ENCODE measurements at regions of chr9 and their contacts with region 1.

Region 1: GRCh38 chr9:116000748-116001329 is 152.8 kb upstream of the PAPPA start:
- DNase-seq: peak in 1 of 2 donors; percentile 14
- ATAC-seq: peak in 1 of 2 donors; percentile 44
- H3K4me3 ChIP-seq: no peak overlapping the region
- H3K27ac ChIP-seq: no peak overlapping the region
- H3K4me1 ChIP-seq: peaks cover 18 to 38% of the 10 kb centered on the region in 2 donors
- H3K27me3 ChIP-seq: no peaks in the 10 kb centered on the region
- CTCF ChIP-seq: peak; percentile 25 to 57 (median 44)
- POLR2A ChIP-seq: no peak

Region 2: GRCh38 chr9:115883457-115884329 is 117.1 kb before region 1 on chr9:
- in situ Hi-C with region 1: no loop called
- intact Hi-C with region 1: loop called (anchors 5 kb)
- DNase-seq: no peak
- ATAC-seq: peak; percentile 62 to 66
- H3K4me3 ChIP-seq: no peak overlapping the region
- H3K27ac ChIP-seq: no peak overlapping the region
- H3K4me1 ChIP-seq: no peaks in the 10 kb centered on the region
- H3K27me3 ChIP-seq: no peaks in the 10 kb centered on the region
- CTCF ChIP-seq: peak; percentile 34 to 55 (median 41)
- POLR2A ChIP-seq: no peak

Region 3: GRCh38 chr9:116064975-116065374 is 64.1 kb after region 1 on chr9:
- in situ Hi-C with region 1: loop called in 1 of 4 experiments (anchors 10 kb)
- intact Hi-C with region 1: no loop called
- DNase-seq: no peak
- ATAC-seq: no peak
- H3K4me3 ChIP-seq: no peak overlapping the region
- H3K27ac ChIP-seq: no peak overlapping the region
- H3K4me1 ChIP-seq: no peaks in the 10 kb centered on the region
- H3K27me3 ChIP-seq: no peaks in the 10 kb centered on the region
- CTCF ChIP-seq: no peak
- POLR2A ChIP-seq: no peak

Region 4: DNA sequence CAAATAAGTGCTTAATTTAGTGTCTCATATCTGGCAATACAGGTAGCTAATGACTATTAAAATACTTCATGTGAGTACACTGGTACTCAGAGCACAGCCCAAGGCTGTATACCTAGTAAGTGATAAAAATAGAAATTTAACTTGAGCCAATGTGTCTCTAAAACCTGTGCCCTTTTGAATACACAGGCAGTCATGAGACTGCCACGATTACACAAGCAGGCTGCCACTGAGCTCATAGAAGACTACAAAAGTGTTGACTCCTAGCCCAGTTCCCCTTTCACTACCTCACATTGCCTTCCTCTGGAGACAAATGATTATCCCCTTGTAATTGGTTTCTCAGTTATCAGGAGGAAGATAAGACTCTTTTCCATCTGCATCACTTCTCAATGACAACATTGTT is 86.4 kb after region 1 on chr9:
- in situ Hi-C with region 1: no loop called
- intact Hi-C with region 1: loop called (anchors 2 kb)
- DNase-seq: peak; percentile 72 to 86
- ATAC-seq: peak; percentile 99
- H3K4me3 ChIP-seq: no peak overlapping the region
- H3K27ac ChIP-seq: peak overlapping the region; percentile 61 to 73 (median 66)
- H3K4me1 ChIP-seq: peaks cover 20 to 24% of the 10 kb centered on the region in 2 donors
- H3K27me3 ChIP-seq: no peaks in the 10 kb centered on the region
- CTCF ChIP-seq: no peak
- POLR2A ChIP-seq: no peak